ENCODE measurements at regions of chr10 and their contacts with region 1.

Region 1: GRCh38 chr10:31759799-31760626 is 168.6 kb downstream of the ARHGAP12 start:
- DNase-seq: peak; percentile 97 to 98
- H3K4me3 ChIP-seq: peak overlapping the region; percentile 90
- H3K4me3 Mint-ChIP-seq: peak overlapping the region; percentile 99
- H3K27ac Mint-ChIP-seq: peak overlapping the region; percentile 94
- H3K4me1 ChIP-seq: peaks cover 8% of the 10 kb centered on the region
- H3K4me1 Mint-ChIP-seq: peaks cover 9% of the 10 kb centered on the region
- H3K27me3 ChIP-seq: no peaks in the 10 kb centered on the region
- H3K27me3 Mint-ChIP-seq: no peaks in the 10 kb centered on the region
- CTCF ChIP-seq: no peak

Region 2: DNA sequence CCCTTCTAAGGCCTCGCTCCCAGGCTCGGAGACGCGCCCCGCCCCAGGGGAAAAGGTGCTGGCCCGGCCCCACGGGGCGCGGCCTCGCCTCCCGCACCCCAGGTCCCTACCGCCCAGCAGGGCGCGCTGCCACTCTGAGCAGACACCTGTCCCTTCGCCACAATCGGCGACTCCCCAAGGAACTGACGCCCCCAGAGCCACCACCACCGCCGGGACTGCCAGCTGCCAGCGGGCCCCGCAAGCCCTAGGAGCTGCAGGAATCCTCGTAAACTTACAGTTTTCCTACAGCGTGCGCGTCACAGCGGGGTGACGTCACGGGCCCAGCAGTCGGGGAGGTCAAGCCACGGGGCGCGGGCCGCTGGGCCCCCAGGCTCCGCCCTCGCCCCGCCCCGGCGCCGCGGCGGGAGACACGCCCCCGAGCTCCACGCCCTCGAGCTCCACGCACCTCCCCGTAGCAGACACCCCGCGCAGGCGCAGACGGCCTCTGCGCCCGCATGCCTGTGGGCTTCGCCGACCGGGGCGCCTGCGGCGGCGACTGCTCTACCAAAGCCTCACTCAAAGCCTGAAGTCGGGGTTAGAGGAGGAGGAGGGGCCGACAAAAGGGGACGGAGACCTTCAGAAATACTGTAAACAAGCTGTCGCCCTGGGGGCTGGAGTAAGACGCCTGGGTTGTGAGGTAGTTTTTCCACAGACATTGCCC is 728.3 kb before region 1 on chr10 and contains the start of gene ZNF438:
- CTCF ChIA-PET with region 1: no interaction called
- POLR2A ChIA-PET with region 1: interaction called, 3 read pairs
- intact Hi-C with region 1: loop called (anchors 5 kb)
- DNase-seq: peak; percentile 95 to 98
- H3K4me3 ChIP-seq: peak within 1 kb of the TSS; percentile 68
- H3K4me3 Mint-ChIP-seq: peak within 1 kb of the TSS; percentile 88
- H3K27ac Mint-ChIP-seq: peak within 1 kb of the TSS; percentile 95
- H3K4me1 ChIP-seq: peaks cover 6% of the 10 kb centered on the region; the same call in 1 of the 2 replicates
- H3K4me1 Mint-ChIP-seq: no peaks in the 10 kb centered on the region
- H3K27me3 ChIP-seq: no peaks in the 10 kb centered on the region
- H3K27me3 Mint-ChIP-seq: peaks cover 12% of the 10 kb centered on the region
- CTCF ChIP-seq: peak in 1 of 2 experiments; percentile 84
- total RNA-seq, gene ZNF438: 0.58 and 1.00 TPM in 2 replicates

Region 3: DNA sequence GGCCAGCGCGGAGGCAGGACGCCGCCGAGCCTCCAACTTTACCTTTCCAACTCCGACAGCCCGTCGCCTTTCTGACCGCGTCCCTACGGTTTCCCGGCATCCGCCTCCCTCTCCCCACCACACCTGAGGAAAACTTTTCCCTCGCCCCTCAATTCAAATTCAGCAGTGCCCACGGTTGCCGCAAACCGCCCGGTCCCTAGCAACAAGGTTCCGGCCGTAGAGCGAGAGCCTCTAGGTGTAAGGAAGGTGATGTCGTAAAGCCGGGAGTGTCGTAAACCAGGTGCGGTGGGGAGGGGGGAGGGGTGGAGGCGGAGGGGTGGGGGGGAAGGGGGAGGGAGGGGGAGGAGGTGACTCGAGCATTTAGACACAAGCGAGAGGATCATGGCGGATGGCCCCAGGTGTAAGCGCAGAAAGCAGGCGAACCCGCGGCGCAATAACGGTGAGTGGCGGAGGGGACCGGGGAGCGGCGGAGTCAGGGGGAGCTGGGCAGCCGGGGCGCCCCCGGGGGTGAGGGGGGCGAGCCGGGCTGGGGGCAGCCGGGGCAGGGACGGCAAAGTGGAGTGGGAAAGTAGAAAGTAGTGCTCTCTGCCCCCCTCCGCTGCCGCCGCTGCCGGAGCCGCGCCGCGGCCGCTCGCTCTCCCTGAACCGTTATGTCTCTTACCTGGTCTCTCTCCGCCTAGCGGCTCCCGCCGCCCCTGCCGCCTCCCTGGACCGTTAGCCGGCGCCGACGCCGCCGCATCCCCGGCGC is 441.0 kb before region 1 on chr10 and contains the start of gene ZEB1:
- CTCF ChIA-PET with region 1: no interaction called
- POLR2A ChIA-PET with region 1: no interaction called
- intact Hi-C with region 1: loop called (anchors 10 kb)
- DNase-seq: peak; percentile 88 to 93
- H3K4me3 ChIP-seq: peak within 1 kb of the TSS; percentile 66
- H3K4me3 Mint-ChIP-seq: peak within 1 kb of the TSS; percentile 91
- H3K27ac Mint-ChIP-seq: peak within 1 kb of the TSS; percentile 72
- H3K4me1 ChIP-seq: peaks cover 11% of the 10 kb centered on the region
- H3K4me1 Mint-ChIP-seq: no peaks in the 10 kb centered on the region
- H3K27me3 ChIP-seq: peaks cover 2% of the 10 kb centered on the region
- H3K27me3 Mint-ChIP-seq: peaks cover 37% of the 10 kb centered on the region
- CTCF ChIP-seq: peak; percentile 40 to 65
- total RNA-seq, gene ZEB1: not detected in 2 replicates

Region 4: DNA sequence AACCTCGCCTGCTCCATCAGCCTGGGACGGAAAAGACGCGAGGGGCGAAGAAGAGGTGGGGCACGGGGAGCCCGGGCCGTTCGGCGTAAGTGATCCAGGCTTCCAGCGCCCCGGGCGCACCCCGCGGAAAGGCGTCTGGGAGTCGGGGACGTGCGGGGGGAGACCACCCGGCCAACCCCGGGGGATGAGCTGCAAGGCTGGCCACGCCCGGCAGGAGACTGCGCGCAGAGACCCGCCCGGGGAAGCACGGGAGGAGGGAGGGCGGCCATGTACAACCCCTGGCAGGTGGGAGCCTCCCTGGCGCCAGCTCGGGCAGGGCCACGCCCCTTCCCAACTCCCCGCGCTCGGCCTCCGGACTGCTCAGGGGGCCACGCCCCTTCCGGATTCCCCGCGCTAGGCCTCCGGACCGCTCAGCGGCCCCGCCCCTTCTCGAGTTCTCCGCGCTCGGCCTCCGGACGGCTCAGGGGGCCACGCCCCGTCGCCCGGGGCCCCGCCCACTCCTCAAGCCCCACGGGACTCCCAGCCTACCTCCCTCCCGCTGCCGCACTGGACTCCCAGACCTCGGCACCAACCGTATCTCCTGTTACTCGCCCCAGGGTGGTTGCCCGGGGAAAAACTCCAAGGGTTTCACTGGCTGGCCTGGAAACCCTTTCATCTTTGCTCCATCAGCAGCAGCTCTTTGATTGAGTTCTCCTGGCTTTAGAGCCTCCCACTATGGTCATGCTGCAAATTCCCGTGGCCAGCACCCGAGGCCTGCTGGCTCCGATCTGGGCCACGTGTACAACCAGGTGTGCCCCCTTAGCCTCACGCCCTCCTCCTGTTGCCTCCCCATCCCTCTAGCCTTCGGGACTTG is 156.6 kb before region 1 on chr10:
- CTCF ChIA-PET with region 1: no interaction called
- POLR2A ChIA-PET with region 1: no interaction called
- intact Hi-C with region 1: loop called (anchors 1 kb)
- DNase-seq: peak; percentile 97 to 98
- H3K4me3 ChIP-seq: peak overlapping the region; percentile 40
- H3K4me3 Mint-ChIP-seq: peak overlapping the region; percentile 85
- H3K27ac Mint-ChIP-seq: peak overlapping the region; percentile 34
- H3K4me1 ChIP-seq: no peaks in the 10 kb centered on the region
- H3K4me1 Mint-ChIP-seq: no peaks in the 10 kb centered on the region
- H3K27me3 ChIP-seq: no peaks in the 10 kb centered on the region
- H3K27me3 Mint-ChIP-seq: peaks cover 6% of the 10 kb centered on the region
- CTCF ChIP-seq: no peak

Region 5: DNA sequence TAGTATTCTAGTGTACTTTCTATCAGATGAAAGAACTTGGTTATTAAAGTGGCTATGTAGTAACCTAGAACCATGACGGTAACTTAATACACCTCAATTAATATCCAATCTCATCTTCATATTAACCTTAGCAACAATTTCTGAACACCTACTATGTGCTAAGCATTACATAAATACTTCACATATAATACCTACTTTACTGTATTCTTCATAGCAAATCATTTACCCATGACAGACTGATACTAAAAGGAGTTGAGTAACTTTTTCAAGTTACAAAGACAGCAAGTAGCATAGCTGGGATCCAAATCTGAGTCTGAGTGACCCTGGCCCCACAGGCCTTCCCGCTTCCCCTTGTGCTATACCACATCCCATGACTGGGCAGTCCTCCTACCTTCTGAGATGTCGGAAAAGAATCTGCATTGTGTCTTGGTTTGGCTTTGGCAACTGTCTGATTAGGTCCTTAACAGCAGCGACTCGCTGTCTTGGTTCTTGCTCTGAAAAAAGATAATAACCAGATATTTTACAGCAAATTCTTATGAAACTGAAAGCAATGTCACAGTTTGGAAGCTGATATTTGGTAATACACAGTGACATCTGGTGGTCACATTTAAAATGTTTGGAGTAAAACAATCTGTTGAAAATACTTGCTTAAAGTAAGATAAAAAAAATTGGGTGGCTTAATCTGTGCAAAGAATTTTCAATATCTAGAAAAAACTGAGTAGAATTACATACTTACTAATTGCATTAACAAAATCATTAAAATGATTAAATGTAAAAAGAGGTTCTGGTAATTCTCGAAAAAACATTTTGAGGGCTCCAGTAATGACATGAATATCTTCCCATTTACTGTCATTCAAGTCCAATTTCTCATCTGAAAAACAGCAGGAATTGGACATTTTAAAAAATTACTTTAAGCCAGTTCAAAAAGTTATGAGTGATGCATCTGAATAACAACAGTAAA is 48.5 kb after region 1 on chr10:
- CTCF ChIA-PET with region 1: no interaction called
- POLR2A ChIA-PET with region 1: no interaction called
- intact Hi-C with region 1: loop called (anchors 5 kb)
- DNase-seq: peak in 1 of 2 experiments; percentile 42
- H3K4me3 ChIP-seq: no peak overlapping the region
- H3K4me3 Mint-ChIP-seq: no peak overlapping the region
- H3K27ac Mint-ChIP-seq: no peak overlapping the region
- H3K4me1 ChIP-seq: no peaks in the 10 kb centered on the region
- H3K4me1 Mint-ChIP-seq: no peaks in the 10 kb centered on the region
- H3K27me3 ChIP-seq: no peaks in the 10 kb centered on the region
- H3K27me3 Mint-ChIP-seq: no peaks in the 10 kb centered on the region
- CTCF ChIP-seq: peak; percentile 52 to 69

Region 6: GRCh38 chr10:32445740-32446535 is 685.9 kb after region 1 on chr10 and contains the start of gene CCDC7:
- CTCF ChIA-PET with region 1: no interaction called
- POLR2A ChIA-PET with region 1: no interaction called
- intact Hi-C with region 1: loop called (anchors 5 kb)
- DNase-seq: peak; percentile 83 to 91
- H3K4me3 ChIP-seq: peak within 1 kb of the TSS; percentile 59
- H3K4me3 Mint-ChIP-seq: peak within 1 kb of the TSS; percentile 73
- H3K27ac Mint-ChIP-seq: peak within 1 kb of the TSS; percentile 92
- H3K4me1 ChIP-seq: 0 out of 2 replicates have a peak, but pooled peaks cover 5% of the 10 kb centered on the region
- H3K4me1 Mint-ChIP-seq: no peaks in the 10 kb centered on the region
- H3K27me3 ChIP-seq: no peaks in the 10 kb centered on the region
- H3K27me3 Mint-ChIP-seq: no peaks in the 10 kb centered on the region
- CTCF ChIP-seq: peak; percentile 30 to 60
- total RNA-seq, gene CCDC7: 0.72 and 1.2 TPM in 2 replicates